ENCODE measurements at regions of chr22 and their contacts with region 1.

Region 1: GRCh38 chr22:49724893-49725474 is 102.7 kb downstream of the BRD1 start:
- DNase-seq: peak; percentile 49 to 68
- ATAC-seq: peak; percentile 92 to 99
- H3K4me3 ChIP-seq: peak overlapping the region; percentile 22; the same call in 2 of the 3 replicates
- H3K27ac ChIP-seq: no peak overlapping the region
- H3K4me1 ChIP-seq: no peaks in the 10 kb centered on the region
- CTCF ChIP-seq: peak; percentile 44
- EP300 ChIP-seq: no peak
- POLR2A ChIP-seq: no peak
- RAD21 ChIP-seq: peak; percentile 71 to 73

Region 2: DNA sequence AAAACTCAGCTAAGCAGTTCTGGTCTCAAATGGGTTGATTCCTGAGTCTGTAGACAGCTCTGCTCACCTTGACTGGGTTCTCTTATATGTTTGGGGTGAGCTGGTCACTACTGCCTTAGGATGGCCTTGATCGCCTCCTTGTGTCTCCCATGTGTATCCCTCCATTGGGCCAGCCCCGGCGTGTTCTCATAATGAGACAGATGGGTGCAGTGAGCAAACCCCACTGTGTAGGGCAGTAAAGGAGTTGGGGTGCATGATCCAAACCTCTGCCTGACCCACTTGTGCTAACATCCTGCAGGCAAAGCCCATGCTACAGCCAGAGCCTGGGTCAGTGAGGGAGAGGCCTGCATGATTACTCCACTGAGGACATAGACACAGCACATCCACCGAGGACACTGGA is 554.9 kb before region 1 on chr22:
- CTCF ChIA-PET with region 1: no interaction called
- POLR2A ChIA-PET with region 1: no interaction called
- DNase-seq: no peak
- ATAC-seq: no peak
- H3K4me3 ChIP-seq: no peak overlapping the region
- H3K27ac ChIP-seq: no peak overlapping the region
- H3K4me1 ChIP-seq: no peaks in the 10 kb centered on the region
- CTCF ChIP-seq: no peak
- EP300 ChIP-seq: no peak
- POLR2A ChIP-seq: no peak
- RAD21 ChIP-seq: no peak

Region 3: GRCh38 chr22:49434101-49434611 is 290.8 kb before region 1 on chr22:
- CTCF ChIA-PET with region 1: interaction called, 10 read pairs
- POLR2A ChIA-PET with region 1: no interaction called
- DNase-seq: peak; percentile 27 to 28
- ATAC-seq: peak; percentile 86 to 96
- H3K4me3 ChIP-seq: no peak overlapping the region
- H3K27ac ChIP-seq: no peak overlapping the region
- H3K4me1 ChIP-seq: no peaks in the 10 kb centered on the region
- CTCF ChIP-seq: peak; percentile 40
- EP300 ChIP-seq: no peak
- POLR2A ChIP-seq: no peak
- RAD21 ChIP-seq: peak; percentile 52 to 53

Region 4: GRCh38 chr22:49735411-49735900 is 10.5 kb after region 1 on chr22:
- CTCF ChIA-PET with region 1: interaction called, 11 read pairs
- POLR2A ChIA-PET with region 1: no interaction called
- DNase-seq: no peak
- ATAC-seq: peak; percentile 40 to 42; a peak in 2 of 6 replicates
- H3K4me3 ChIP-seq: no peak overlapping the region
- H3K27ac ChIP-seq: no peak overlapping the region
- H3K4me1 ChIP-seq: no peaks in the 10 kb centered on the region
- CTCF ChIP-seq: no peak
- EP300 ChIP-seq: no peak
- POLR2A ChIP-seq: no peak
- RAD21 ChIP-seq: no peak